OCI-LY7 (cell line): ENCODE measurements at regions of chr4 and their contacts with region 1.

Region 1: GRCh38 chr4:12633053-12633651 is 851.0 kb downstream of the RAB28 start:
- DNase-seq: peak; percentile 67
- H3K4me3 ChIP-seq: no peak overlapping the region
- H3K27ac ChIP-seq: no peak overlapping the region
- H3K4me1 ChIP-seq: no peaks in the 10 kb centered on the region
- CTCF ChIP-seq: peak; percentile 89

Region 2: GRCh38 chr4:11376571-11376970 is 1256.6 kb before region 1 on chr4:
- CTCF ChIA-PET with region 1: no interaction called
- POLR2A ChIA-PET with region 1: no interaction called
- intact Hi-C with region 1: no loop called
- DNase-seq: no peak
- H3K4me3 ChIP-seq: no peak overlapping the region
- H3K27ac ChIP-seq: no peak overlapping the region
- H3K4me1 ChIP-seq: no peaks in the 10 kb centered on the region
- CTCF ChIP-seq: no peak

Region 3: GRCh38 chr4:11765849-11766453 is 867.2 kb before region 1 on chr4:
- CTCF ChIA-PET with region 1: no interaction called
- POLR2A ChIA-PET with region 1: no interaction called
- intact Hi-C with region 1: loop called (anchors 5 kb)
- DNase-seq: peak; percentile 22
- H3K4me3 ChIP-seq: no peak overlapping the region
- H3K27ac ChIP-seq: no peak overlapping the region
- H3K4me1 ChIP-seq: no peaks in the 10 kb centered on the region
- CTCF ChIP-seq: peak; percentile 80

Region 4: GRCh38 chr4:12293906-12294525 is 339.1 kb before region 1 on chr4:
- CTCF ChIA-PET with region 1: no interaction called
- POLR2A ChIA-PET with region 1: no interaction called
- intact Hi-C with region 1: no loop called
- DNase-seq: no peak
- H3K4me3 ChIP-seq: no peak overlapping the region
- H3K27ac ChIP-seq: no peak overlapping the region
- H3K4me1 ChIP-seq: no peaks in the 10 kb centered on the region
- CTCF ChIP-seq: no peak